Panc1 (cell line): ENCODE measurements at regions of chr2 and their contacts with region 1.

Region 1: DNA sequence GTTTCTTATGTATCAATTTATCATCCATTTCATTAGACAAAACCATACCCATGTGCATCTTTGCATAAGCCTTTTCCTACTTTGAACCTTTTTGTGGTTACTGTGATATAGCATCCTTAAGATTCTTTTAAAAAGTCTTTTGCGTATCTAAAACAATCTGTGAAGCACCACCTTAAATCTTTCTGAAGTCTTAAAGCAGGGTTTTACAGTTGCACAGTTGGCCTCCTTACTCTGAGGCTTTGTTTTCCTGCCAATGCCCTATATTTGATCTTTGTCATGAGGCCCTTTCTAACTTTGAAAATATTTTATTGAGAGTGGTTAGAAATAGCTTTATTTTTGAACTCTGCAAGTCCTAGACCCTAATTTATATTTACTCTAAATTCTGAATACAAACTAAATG is 163.4 kb upstream of the MAP3K20 start:
- DNase-seq: no peak
- ATAC-seq: no peak
- H3K4me3 ChIP-seq: no peak overlapping the region
- H3K27ac ChIP-seq: no peak overlapping the region
- H3K4me1 ChIP-seq: no peaks in the 10 kb centered on the region
- H3K27me3 ChIP-seq: peaks cover 4% of the 10 kb centered on the region; the same call in 1 of the 2 replicates
- CTCF ChIP-seq: no peak

Region 2: DNA sequence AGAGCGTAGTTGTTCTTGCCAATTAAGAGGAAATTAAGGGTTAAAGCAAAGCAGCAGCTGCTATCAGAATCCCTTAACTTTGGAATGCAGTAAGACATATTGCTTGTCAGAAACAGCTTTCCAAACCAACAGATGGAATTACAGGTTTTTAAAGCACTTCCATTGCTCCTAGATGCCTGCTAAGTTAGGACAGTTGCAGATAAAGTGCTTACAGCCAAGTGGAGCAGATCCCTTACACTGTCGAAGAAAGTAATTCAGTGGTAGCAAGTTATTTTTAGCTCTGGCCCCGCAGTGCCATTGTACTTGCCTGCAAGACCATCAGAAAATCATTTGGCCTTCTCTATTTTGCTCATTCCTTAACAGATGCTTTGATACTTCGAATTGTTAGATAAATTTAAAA is 351.0 kb before region 1 on chr2:
- CTCF ChIA-PET with region 1: no interaction called
- POLR2A ChIA-PET with region 1: no interaction called
- in situ Hi-C with region 1: no loop called
- intact Hi-C with region 1: no loop called
- DNase-seq: no peak
- ATAC-seq: no peak
- H3K4me3 ChIP-seq: no peak overlapping the region
- H3K27ac ChIP-seq: no peak overlapping the region
- H3K4me1 ChIP-seq: peaks cover 13% of the 10 kb centered on the region
- H3K27me3 ChIP-seq: no peaks in the 10 kb centered on the region
- CTCF ChIP-seq: no peak

Region 3: DNA sequence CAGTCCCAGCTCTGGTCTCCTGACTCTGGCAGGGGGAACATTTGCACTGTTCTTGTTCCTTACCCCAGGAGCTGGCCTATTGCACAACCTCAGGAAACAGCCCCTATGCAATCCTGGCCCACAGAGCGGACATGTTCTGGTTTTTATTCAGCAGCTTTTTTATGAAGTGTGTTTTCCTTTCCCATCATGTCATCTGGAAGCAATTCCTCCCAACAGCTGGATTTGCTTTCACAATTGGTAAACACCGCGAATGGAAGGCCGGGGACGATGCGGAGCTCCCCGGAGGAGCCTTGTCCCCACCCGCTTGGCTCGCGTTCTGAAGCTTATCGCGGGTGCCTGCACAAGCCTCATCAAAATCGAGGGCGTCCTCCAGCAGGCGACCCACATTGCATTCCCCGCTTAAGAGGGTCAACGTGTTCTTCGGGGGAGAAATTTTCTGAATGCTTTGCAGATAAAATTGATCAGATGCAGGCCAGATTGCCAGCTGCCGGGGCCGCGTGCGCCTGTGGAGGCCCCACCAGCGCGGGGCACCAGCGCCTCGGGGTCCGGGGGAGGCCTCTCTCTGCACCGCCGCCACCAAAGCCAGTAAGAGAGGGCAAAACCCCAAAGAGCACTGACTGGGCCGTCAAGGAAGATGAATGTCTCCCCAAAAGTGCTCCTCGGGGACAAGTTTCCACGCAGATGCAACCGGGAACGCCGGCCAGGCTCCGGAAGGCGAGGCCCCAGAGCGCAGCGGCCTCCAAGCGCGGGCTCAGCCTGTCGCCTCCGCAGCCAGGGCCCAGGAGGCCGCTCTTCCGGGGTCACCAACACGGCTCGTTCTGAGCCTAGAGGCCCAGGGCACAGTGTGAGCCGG is 1113.2 kb after region 1 on chr2:
- CTCF ChIA-PET with region 1: no interaction called
- POLR2A ChIA-PET with region 1: interaction called, 13 read pairs
- in situ Hi-C with region 1: no loop called
- intact Hi-C with region 1: no loop called
- DNase-seq: no peak
- ATAC-seq: no peak
- H3K4me3 ChIP-seq: no peak overlapping the region
- H3K27ac ChIP-seq: no peak overlapping the region
- H3K4me1 ChIP-seq: no peaks in the 10 kb centered on the region
- H3K27me3 ChIP-seq: no peaks in the 10 kb centered on the region
- CTCF ChIP-seq: no peak